Naive thymus-derived CD4-positive, alpha-beta T cell (primary cell): ENCODE measurements at regions of chr6 and their contacts with region 1.

Region 1: GRCh38 chr6:2848851-2849250 is 7.2 kb upstream of the SERPINB1 start:
- DNase-seq: peak in 7 of 9 donors; percentile 62 to 84 (median 75)
- ATAC-seq: peak; percentile 82
- H3K4me3 ChIP-seq: no peak overlapping the region
- H3K4me3 Mint-ChIP-seq: peak overlapping the region; percentile 30 to 83 (median 66)
- H3K27ac ChIP-seq: peak overlapping the region; percentile 63
- H3K27ac Mint-ChIP-seq: peak overlapping the region; percentile 85 to 95 (median 91)
- H3K4me1 ChIP-seq: peaks cover 16 to 30% of the 10 kb centered on the region in 2 donors
- H3K4me1 Mint-ChIP-seq: peaks cover 25 to 49% (median 48%) of the 10 kb centered on the region in 7 donors
- H3K27me3 ChIP-seq: no peaks in the 10 kb centered on the region
- H3K27me3 Mint-ChIP-seq: no peaks in the 10 kb centered on the region

Region 2: GRCh38 chr6:2369606-2370215 is 479.1 kb before region 1 on chr6:
- CTCF ChIA-PET with region 1: no interaction called
- POLR2A ChIA-PET with region 1: no interaction called
- intact Hi-C with region 1: no loop called
- DNase-seq: no peak
- ATAC-seq: no peak
- H3K4me3 ChIP-seq: no peak overlapping the region
- H3K4me3 Mint-ChIP-seq: no peak overlapping the region
- H3K27ac ChIP-seq: no peak overlapping the region
- H3K27ac Mint-ChIP-seq: peak overlapping the region in 1 of 9 donors; percentile 48
- H3K4me1 ChIP-seq: no peaks in the 10 kb centered on the region
- H3K4me1 Mint-ChIP-seq: peaks cover 0 to 9% (median 0%) of the 10 kb centered on the region in 7 donors
- H3K27me3 ChIP-seq: no peaks in the 10 kb centered on the region
- H3K27me3 Mint-ChIP-seq: peaks cover 0 to 3% (median 0%) of the 10 kb centered on the region in 5 donors

Region 3: DNA sequence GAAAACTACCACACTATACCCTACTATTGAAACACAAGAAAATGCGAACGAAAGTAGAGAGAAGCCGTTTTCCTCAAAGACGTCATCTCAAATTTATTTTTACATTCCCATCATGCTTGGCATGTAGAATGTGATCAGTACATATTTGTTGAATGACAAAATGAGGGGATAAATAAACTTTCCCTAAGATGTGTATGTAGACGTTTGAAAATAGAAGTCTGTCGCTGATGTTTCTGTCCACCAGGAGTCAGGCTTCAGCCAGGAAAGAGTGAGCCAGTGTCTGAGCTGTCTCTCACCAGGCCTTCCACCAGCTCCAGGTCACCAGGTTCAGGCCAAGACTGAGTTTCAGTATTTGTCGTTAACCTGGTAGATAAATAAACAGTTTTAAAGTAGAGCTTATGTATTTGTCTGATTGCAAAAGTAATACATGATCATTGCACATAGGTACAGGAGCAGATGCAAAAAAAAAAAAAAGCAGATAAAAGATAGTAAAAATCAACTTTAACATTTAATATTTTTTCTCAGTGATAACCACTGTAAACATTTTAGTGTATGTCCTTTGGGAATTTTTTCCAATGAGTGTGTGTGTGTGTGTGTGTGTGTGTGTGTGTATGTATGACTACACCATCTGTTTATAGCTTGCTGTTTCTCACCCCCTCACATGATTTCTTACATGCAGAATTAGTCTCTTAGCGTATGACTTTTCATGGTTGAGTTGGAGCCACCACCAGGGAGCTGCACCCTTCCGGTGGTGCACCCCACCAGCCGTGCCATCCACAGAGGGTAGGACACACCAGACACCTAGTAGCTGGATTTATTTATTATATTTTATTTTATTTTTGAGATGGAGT is 57.5 kb before region 1 on chr6:
- CTCF ChIA-PET with region 1: interaction called, 16 read pairs
- POLR2A ChIA-PET with region 1: interaction called, 6 read pairs
- intact Hi-C with region 1: loop called (anchors 1 kb)
- DNase-seq: peak in 8 of 9 donors; percentile 10 to 61 (median 53)
- ATAC-seq: peak; percentile 73
- H3K4me3 ChIP-seq: no peak overlapping the region
- H3K4me3 Mint-ChIP-seq: peak overlapping the region in 8 of 10 donors; percentile 12 to 71 (median 56)
- H3K27ac ChIP-seq: no peak overlapping the region
- H3K27ac Mint-ChIP-seq: peak overlapping the region; percentile 29 to 90 (median 81)
- H3K4me1 ChIP-seq: peaks cover 15 to 19% of the 10 kb centered on the region in 2 donors
- H3K4me1 Mint-ChIP-seq: peaks cover 29 to 44% (median 36%) of the 10 kb centered on the region in 7 donors
- H3K27me3 ChIP-seq: no peaks in the 10 kb centered on the region
- H3K27me3 Mint-ChIP-seq: no peaks in the 10 kb centered on the region

Region 4: GRCh38 chr6:2870056-2870674 is 21.3 kb after region 1 on chr6:
- CTCF ChIA-PET with region 1: interaction called, 57 read pairs
- POLR2A ChIA-PET with region 1: interaction called, 27 read pairs
- intact Hi-C with region 1: no loop called
- DNase-seq: no peak
- ATAC-seq: no peak
- H3K4me3 ChIP-seq: no peak overlapping the region
- H3K4me3 Mint-ChIP-seq: no peak overlapping the region
- H3K27ac ChIP-seq: no peak overlapping the region
- H3K27ac Mint-ChIP-seq: no peak overlapping the region
- H3K4me1 ChIP-seq: peaks cover 7 to 11% of the 10 kb centered on the region in 2 donors
- H3K4me1 Mint-ChIP-seq: peaks cover 16 to 60% (median 47%) of the 10 kb centered on the region in 7 donors
- H3K27me3 ChIP-seq: no peaks in the 10 kb centered on the region
- H3K27me3 Mint-ChIP-seq: no peaks in the 10 kb centered on the region

Region 5: GRCh38 chr6:2885967-2886735 is 37.3 kb after region 1 on chr6:
- CTCF ChIA-PET with region 1: interaction called, 57 read pairs
- POLR2A ChIA-PET with region 1: interaction called, 30 read pairs
- intact Hi-C with region 1: no loop called
- DNase-seq: no peak
- ATAC-seq: peak; percentile 58
- H3K4me3 ChIP-seq: no peak overlapping the region
- H3K4me3 Mint-ChIP-seq: peak overlapping the region in 5 of 10 donors; percentile 0 to 28 (median 16)
- H3K27ac ChIP-seq: peak overlapping the region; percentile 23
- H3K27ac Mint-ChIP-seq: peak overlapping the region in 8 of 9 donors; percentile 39 to 90 (median 70)
- H3K4me1 ChIP-seq: peaks cover 3 to 24% of the 10 kb centered on the region in 2 donors
- H3K4me1 Mint-ChIP-seq: peaks cover 30 to 85% (median 74%) of the 10 kb centered on the region in 7 donors
- H3K27me3 ChIP-seq: no peaks in the 10 kb centered on the region
- H3K27me3 Mint-ChIP-seq: no peaks in the 10 kb centered on the region

Region 6: DNA sequence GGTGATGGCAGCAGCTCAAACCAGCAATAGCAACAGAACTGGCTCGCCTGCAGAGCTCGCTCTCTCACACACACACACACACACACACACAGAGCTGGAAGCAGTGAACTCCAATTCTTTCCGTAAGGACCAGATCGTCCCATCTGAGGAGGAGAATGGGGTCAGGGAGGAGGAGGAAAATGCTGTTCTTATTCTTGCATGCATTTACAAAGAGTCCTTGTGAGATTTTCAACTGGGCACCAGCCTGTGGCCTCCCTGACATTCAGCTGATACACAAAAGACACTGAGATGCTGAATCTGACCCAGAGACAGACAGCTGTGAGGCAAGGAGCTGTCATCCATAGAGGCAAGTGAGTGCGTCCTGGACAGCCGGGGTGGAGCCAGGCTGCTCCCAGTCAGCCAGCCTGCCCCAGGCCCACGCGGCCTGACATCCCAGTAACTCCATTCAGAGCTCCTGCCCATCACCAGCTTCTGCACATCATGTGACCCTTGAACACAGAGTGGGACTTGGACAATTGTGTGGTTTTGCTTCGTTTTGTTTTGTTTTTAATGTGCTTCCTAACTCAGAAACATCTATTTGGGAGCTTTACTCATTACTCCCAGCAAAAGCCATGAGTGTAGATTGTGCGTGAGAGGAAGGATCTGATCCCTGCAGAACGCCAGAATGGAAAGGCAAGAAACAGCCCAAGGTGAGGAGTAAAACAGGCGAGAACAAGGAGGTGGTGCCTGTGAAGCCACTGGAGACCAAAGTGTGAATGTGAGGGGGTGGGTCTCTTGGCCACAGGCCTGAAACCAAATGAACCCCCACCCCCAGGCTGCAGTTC is 52.2 kb after region 1 on chr6:
- CTCF ChIA-PET with region 1: interaction called, 40 read pairs
- POLR2A ChIA-PET with region 1: interaction called, 71 read pairs
- intact Hi-C with region 1: loop called (anchors 1 to 2 kb)
- DNase-seq: no peak
- ATAC-seq: no peak
- H3K4me3 ChIP-seq: peak overlapping the region; percentile 85
- H3K4me3 Mint-ChIP-seq: peak overlapping the region; percentile 96 to 100 (median 99)
- H3K27ac ChIP-seq: peak overlapping the region; percentile 90
- H3K27ac Mint-ChIP-seq: peak overlapping the region; percentile 88 to 98 (median 97)
- H3K4me1 ChIP-seq: peaks cover 29 to 33% of the 10 kb centered on the region in 2 donors
- H3K4me1 Mint-ChIP-seq: peaks cover 54 to 71% (median 66%) of the 10 kb centered on the region in 7 donors
- H3K27me3 ChIP-seq: no peaks in the 10 kb centered on the region
- H3K27me3 Mint-ChIP-seq: peaks cover 0 to 4% (median 0%) of the 10 kb centered on the region in 5 donors

Region 7: DNA sequence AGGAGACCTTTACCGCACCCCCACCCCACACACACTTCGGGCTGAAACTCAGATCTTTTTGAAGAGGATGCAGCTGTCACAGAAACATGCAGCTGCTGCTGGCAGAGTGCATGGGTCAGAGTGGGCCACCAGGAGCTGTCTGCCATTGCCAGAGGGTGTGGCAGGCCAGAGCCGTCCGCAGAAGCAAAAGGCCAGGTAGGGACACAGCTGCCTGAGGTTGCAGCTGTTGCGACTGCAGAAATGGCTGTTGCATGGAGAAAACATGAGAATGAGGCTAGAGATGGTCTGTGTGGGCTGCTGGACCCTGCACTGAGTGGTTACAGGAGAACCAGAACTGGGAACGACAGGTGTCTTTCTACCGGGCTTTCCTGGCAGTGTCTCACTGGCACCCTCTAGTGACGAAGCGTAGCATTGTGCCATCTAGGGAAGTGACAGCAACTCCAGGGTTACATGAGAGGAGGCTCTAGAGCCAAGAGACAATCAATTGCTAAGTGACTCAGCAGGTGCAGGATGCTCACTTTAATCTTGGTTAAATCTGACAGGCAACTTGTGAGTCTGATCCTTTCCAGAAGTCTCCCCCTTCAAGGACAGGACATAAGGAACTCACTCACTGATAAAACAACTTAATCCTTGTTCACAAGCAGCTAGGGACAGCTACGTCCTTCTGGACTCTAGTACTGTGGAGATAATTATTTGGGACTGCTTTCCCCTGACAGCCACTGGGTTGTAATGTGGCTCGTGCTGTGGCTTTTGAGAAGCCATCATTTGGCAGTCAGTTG is 83.3 kb after region 1 on chr6:
- CTCF ChIA-PET with region 1: interaction called, 53 read pairs
- POLR2A ChIA-PET with region 1: interaction called, 90 read pairs
- intact Hi-C with region 1: loop called (anchors 1 kb)
- DNase-seq: peak; percentile 61 to 87 (median 82)
- ATAC-seq: peak; percentile 99
- H3K4me3 ChIP-seq: no peak overlapping the region
- H3K4me3 Mint-ChIP-seq: peak overlapping the region in 8 of 10 donors; percentile 28 to 71 (median 44)
- H3K27ac ChIP-seq: no peak overlapping the region
- H3K27ac Mint-ChIP-seq: peak overlapping the region in 8 of 9 donors; percentile 3 to 86 (median 60)
- H3K4me1 ChIP-seq: peaks cover 8 to 20% of the 10 kb centered on the region in 2 donors
- H3K4me1 Mint-ChIP-seq: peaks cover 8 to 42% (median 26%) of the 10 kb centered on the region in 7 donors
- H3K27me3 ChIP-seq: no peaks in the 10 kb centered on the region
- H3K27me3 Mint-ChIP-seq: peaks cover 0 to 10% (median 0%) of the 10 kb centered on the region in 5 donors

Region 8: DNA sequence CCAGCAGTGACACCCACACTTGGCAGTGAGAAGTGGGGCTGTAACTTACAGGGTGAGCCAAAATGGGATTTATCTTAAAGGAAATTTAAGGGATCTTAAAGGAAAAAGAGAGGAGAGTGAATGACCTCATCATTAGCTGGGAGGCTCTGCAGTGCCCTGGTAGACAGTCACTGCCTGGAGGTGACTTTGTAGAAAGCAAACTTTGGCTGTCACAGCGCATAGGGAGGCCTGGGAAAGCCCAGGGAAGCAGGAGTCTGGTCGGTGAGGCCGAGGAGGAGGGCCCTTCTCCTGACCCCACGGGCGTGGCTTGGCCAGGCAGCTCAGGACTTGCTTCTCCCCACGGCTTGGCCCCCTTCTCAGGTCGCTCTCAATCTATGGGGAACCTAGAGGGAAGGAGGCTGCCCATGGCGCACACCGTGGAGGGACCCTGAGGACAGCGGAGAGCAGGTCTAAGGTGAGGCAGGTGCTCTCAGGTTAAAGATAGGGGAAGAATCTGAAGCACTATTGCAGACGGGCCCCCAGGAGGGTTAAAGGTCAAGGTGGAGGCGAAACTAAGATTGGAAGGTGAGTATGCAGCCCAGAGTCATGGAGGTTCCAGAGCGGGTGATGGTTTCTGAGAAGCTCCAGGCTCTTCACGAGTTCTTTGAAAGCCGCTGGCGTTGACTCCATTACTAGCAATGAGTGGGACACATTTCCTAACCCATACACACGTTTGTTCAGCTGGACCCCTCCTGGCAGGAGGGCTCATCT is 203.8 kb after region 1 on chr6:
- CTCF ChIA-PET with region 1: interaction called, 3 read pairs
- POLR2A ChIA-PET with region 1: no interaction called
- intact Hi-C with region 1: loop called (anchors 1 to 5 kb)
- DNase-seq: no peak
- ATAC-seq: no peak
- H3K4me3 ChIP-seq: peak overlapping the region; percentile 64
- H3K4me3 Mint-ChIP-seq: peak overlapping the region; percentile 70 to 83 (median 76)
- H3K27ac ChIP-seq: no peak overlapping the region
- H3K27ac Mint-ChIP-seq: peak overlapping the region; percentile 52 to 84 (median 69)
- H3K4me1 ChIP-seq: peaks cover 5% of the 10 kb centered on the region in 2 donors
- H3K4me1 Mint-ChIP-seq: peaks cover 7 to 36% (median 17%) of the 10 kb centered on the region in 7 donors
- H3K27me3 ChIP-seq: no peaks in the 10 kb centered on the region
- H3K27me3 Mint-ChIP-seq: peaks cover 0 to 23% (median 0%) of the 10 kb centered on the region in 5 donors